ENCODE measurements at regions of chr20 and their contacts with region 1.

Region 1: DNA sequence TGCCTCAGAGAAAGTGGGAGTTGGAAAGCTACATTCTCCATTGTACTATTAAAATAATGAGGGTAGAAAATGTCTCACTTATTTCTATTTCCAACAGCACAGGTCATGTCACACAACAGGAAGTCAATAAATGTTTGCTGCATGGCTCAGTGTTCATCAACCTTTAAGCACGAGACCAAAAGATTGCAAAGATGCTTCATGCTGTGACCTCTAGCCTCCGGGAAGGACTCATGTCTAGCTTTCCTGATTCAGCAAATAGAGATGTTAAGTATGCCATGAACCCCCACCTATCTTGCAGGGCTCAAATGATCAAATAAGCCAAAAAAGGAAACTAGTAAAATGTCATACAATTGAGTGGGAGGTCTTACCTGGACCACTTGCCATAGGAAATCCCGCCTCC is 57.4 kb downstream of the NCOA6 start:
- DNase-seq: no peak
- H3K4me3 ChIP-seq: no peak overlapping the region
- H3K4me3 Mint-ChIP-seq: no peak overlapping the region
- H3K27ac ChIP-seq: no peak overlapping the region
- H3K27ac Mint-ChIP-seq: no peak overlapping the region
- H3K4me1 ChIP-seq: no peaks in the 10 kb centered on the region
- H3K4me1 Mint-ChIP-seq: no peaks in the 10 kb centered on the region
- H3K27me3 ChIP-seq: no peaks in the 10 kb centered on the region
- H3K27me3 Mint-ChIP-seq: peaks cover 0 to 2% (median 0%) of the 10 kb centered on the region in 3 donors
- CTCF ChIP-seq: no peak

Region 2: DNA sequence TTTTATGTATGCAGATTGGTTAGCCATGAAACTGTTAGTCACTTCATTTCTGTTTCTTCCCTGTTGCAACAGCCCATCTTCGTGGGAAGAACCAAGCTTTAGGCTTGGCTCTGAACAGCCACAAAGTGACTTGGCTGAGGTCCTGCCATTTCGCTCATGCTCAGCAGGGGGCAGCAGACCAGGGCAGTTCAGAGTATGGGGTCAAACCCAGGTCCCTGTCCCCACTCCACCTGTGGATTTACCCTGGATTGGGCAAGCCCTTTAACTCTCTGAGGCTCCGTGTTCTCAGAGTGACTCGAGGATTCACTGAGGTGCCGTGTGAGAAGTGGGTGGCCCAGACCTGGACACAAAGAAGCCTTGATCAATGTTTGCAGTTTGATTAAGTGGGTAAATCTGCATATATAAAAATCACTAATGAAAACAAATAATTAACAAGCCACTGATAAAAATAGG is 229.4 kb before region 1 on chr20:
- intact Hi-C with region 1: loop called in 1 of 2 experiments (anchors 5 kb)
- DNase-seq: peak in 2 of 3 donors; percentile 37 to 56
- H3K4me3 ChIP-seq: no peak overlapping the region
- H3K4me3 Mint-ChIP-seq: no peak overlapping the region
- H3K27ac ChIP-seq: no peak overlapping the region
- H3K27ac Mint-ChIP-seq: peak overlapping the region in 5 of 7 donors; percentile 21 to 67 (median 33)
- H3K4me1 ChIP-seq: no peaks in the 10 kb centered on the region
- H3K4me1 Mint-ChIP-seq: no peaks in the 10 kb centered on the region
- H3K27me3 ChIP-seq: no peaks in the 10 kb centered on the region
- H3K27me3 Mint-ChIP-seq: no peaks in the 10 kb centered on the region
- CTCF ChIP-seq: peak; percentile 84

Region 3: GRCh38 chr20:34915749-34916455 is 147.8 kb after region 1 on chr20:
- intact Hi-C with region 1: no loop called
- DNase-seq: no peak
- H3K4me3 ChIP-seq: no peak overlapping the region
- H3K4me3 Mint-ChIP-seq: no peak overlapping the region
- H3K27ac ChIP-seq: no peak overlapping the region
- H3K27ac Mint-ChIP-seq: peak overlapping the region in 1 of 7 donors; percentile 45
- H3K4me1 ChIP-seq: no peaks in the 10 kb centered on the region
- H3K4me1 Mint-ChIP-seq: peaks cover 9% of the 10 kb centered on the region
- H3K27me3 ChIP-seq: no peaks in the 10 kb centered on the region
- H3K27me3 Mint-ChIP-seq: no peaks in the 10 kb centered on the region
- CTCF ChIP-seq: no peak

Measured in CD14-positive monocyte (primary cell).